ENCODE measurements at regions of chr14 and their contacts with region 1.

Region 1: GRCh38 chr14:53295985-53296582 is 143.0 kb upstream of the DDHD1 start:
- DNase-seq: no peak
- ATAC-seq: no peak
- H3K4me3 ChIP-seq: no peak overlapping the region
- H3K27ac ChIP-seq: no peak overlapping the region
- H3K4me1 ChIP-seq: no peaks in the 10 kb centered on the region
- H3K27me3 ChIP-seq: no peaks in the 10 kb centered on the region
- CTCF ChIP-seq: peak; percentile 72

Region 2: GRCh38 chr14:53152890-53153701 is 143.0 kb before region 1 on chr14 and contains the start of gene DDHD1:
- intact Hi-C with region 1: loop called in 1 of 2 experiments (anchors 10 kb)
- DNase-seq: peak; percentile 83 to 88
- ATAC-seq: peak; percentile 85 to 97 (median 94)
- H3K4me3 ChIP-seq: peak within 1 kb of the TSS; percentile 78
- H3K27ac ChIP-seq: peak within 1 kb of the TSS; percentile 85
- H3K4me1 ChIP-seq: peaks cover 11% of the 10 kb centered on the region
- H3K27me3 ChIP-seq: no peaks in the 10 kb centered on the region
- CTCF ChIP-seq: no peak
- total RNA-seq, gene DDHD1: 4.0 to 7.6 (median 4.7) TPM

Region 3: DNA sequence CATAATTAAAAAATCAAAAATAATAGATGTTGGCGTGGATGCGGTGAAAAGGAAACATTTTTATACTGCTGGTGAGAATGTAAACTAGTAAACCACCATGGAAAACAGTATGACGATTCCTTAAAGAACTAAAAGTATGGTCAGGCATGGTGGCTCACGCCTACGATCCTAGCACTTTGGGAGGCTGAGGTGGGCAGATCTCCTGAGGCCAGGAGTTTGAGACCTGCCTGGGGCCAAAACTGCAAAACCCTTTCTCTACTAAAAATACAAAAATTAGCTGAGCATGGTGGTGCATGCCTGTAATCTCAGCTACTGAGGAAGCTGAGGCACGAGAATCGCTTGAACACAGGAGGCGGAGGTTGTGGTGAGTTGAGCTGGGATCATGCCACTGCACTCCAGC is 856.3 kb after region 1 on chr14:
- intact Hi-C with region 1: no loop called
- DNase-seq: no peak
- ATAC-seq: no peak
- H3K4me3 ChIP-seq: no peak overlapping the region
- H3K27ac ChIP-seq: no peak overlapping the region
- H3K4me1 ChIP-seq: no peaks in the 10 kb centered on the region
- H3K27me3 ChIP-seq: no peaks in the 10 kb centered on the region
- CTCF ChIP-seq: no peak

Region 4: DNA sequence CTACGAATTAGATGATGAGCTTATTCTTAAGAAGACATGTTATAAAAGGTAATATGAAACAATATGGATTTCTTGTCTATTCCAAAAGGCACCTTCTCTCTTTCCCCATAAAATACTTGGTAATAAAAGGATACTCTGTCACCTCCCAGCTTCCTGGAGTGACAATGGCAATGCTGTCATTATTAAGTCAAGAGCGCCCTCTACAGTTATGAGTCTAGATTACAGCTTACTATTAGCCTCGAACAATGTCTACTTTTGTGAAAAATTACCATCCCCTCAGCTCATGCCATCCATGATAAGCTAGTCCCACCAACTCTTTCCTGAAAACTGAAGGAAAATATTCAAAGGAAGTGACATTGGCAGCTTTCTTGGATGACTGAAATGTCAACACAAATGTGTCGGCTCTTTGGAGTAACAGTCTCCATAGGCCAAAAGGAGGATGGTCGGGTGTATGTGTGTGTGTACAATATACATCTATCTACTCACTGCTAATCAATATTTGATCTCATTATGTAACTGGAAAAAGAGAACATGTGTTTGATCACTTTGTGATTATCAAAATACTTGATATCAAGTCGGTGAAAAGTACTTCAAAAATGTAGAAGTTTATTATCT is 1052.0 kb after region 1 on chr14:
- intact Hi-C with region 1: loop called in 1 of 2 experiments (anchors 10 kb)
- DNase-seq: no peak
- ATAC-seq: peak in 2 of 4 donors; percentile 56 to 72
- H3K4me3 ChIP-seq: no peak overlapping the region
- H3K27ac ChIP-seq: no peak overlapping the region
- H3K4me1 ChIP-seq: peaks cover 3% of the 10 kb centered on the region
- H3K27me3 ChIP-seq: peaks cover 0 to 25% (median 0%) of the 10 kb centered on the region in 3 donors
- CTCF ChIP-seq: peak; percentile 58